ENCODE measurements at regions of chr17 and their contacts with region 1.

Region 1: DNA sequence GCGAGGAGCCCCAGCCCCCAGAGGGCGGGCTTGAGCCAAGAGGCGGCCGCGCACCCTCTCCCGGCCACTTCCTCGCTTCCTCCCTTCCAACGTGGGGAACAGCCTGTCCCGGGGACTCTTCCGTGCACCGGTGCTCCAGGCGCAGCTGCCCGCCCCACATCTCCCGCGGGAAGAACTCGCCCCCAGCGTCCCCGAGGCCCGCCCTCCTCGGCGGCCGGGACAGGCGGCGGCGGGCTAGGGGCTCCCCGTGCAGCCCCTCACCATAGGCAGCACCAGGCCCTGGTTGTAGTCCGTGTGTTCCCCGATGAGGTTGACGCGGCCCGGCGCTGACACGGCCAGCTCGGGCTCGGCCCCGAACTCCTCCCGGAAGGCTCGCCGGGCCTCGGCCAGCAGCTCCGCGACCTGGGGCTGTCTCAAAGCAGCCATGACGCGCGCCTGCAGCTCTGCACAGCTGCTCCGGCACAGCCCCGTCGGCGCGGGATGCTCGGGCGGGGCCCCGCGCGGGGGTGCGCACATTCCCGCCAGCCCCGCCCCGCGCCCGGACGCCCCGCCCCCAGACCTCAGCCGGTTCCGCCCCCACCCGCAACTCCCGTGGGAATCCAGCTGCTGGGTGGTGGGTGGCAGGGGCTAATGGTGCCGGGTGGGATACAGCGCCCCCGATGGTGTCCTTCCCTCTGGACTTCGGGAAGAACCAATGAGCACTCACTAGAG is at the start of gene GALK1:
- DNase-seq: peak; percentile 67
- ATAC-seq: peak; percentile 76
- H3K4me3 Mint-ChIP-seq: peak within 1 kb of the TSS; percentile 75
- H3K27ac Mint-ChIP-seq: peak within 1 kb of the TSS; percentile 92
- H3K4me1 Mint-ChIP-seq: peaks cover 9% of the 10 kb centered on the region
- H3K27me3 Mint-ChIP-seq: no peaks in the 10 kb centered on the region
- CTCF ChIP-seq: no peak
- total RNA-seq, gene GALK1: 42.2 to 49.9 TPM (median 49.4 TPM) in 3 replicates

Region 2: DNA sequence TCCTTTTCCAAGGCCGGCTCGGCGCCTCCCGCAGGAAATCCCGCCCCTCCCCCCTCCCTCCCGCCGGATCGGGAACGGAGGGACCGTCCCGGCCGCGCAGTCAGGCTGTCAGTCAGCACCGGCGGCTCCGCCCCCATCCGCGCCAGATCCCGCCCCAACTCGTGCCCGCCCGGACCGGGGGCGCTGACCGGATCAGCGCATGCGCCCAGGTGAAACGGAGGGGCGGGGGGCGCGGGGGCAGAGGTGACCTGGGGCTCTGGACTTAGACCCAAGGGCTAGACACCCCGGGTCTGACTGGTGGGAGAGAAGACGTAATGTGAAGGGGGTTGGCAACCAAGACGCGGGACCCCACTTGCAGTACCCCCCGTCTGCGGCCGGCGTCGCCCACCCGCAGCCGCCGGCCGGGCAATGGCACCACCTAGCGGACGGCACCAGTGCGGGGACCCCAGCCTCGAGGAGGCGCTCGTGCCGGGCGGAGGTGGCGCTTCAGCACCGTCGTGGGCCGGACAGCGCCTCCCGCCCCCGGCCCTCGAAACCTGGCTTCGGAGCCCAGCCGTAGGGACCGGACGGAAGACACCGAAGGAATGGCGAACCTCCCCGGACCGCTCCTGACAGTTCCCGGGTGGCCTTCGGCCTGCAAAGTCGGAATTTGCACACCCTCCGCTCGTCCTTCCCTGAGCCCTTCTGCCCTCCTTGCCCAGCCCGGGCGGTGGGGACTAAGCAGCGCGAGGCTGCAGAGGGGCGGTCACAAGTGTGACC is 249.2 kb before region 1 on chr17 and contains the start of gene CASKIN2:
- CTCF ChIA-PET with region 1: interaction called, 10 read pairs
- POLR2A ChIA-PET with region 1: no interaction called
- DNase-seq: peak; percentile 98
- ATAC-seq: peak; percentile 76
- H3K4me3 Mint-ChIP-seq: peak within 1 kb of the TSS; percentile 80
- H3K27ac Mint-ChIP-seq: no peak within 1 kb of the TSS
- H3K4me1 Mint-ChIP-seq: peaks cover 20% of the 10 kb centered on the region
- H3K27me3 Mint-ChIP-seq: no peaks in the 10 kb centered on the region
- CTCF ChIP-seq: peak; percentile 90
- total RNA-seq, gene CASKIN2: 31.3 to 32.2 TPM (median 31.9 TPM) in 3 replicates

Region 3: GRCh38 chr17:75779231-75779986 is 14.5 kb after region 1 on chr17:
- CTCF ChIA-PET with region 1: interaction called, 58 read pairs
- POLR2A ChIA-PET with region 1: interaction called, 22 read pairs
- DNase-seq: peak; percentile 94
- ATAC-seq: peak; percentile 85
- H3K4me3 Mint-ChIP-seq: peak overlapping the region; percentile 94
- H3K27ac Mint-ChIP-seq: peak overlapping the region; percentile 99
- H3K4me1 Mint-ChIP-seq: peaks cover 46% of the 10 kb centered on the region
- H3K27me3 Mint-ChIP-seq: peaks cover 4% of the 10 kb centered on the region
- CTCF ChIP-seq: 0 out of 2 replicates have a peak, but pooled peaks have one; percentile 11

Region 4: DNA sequence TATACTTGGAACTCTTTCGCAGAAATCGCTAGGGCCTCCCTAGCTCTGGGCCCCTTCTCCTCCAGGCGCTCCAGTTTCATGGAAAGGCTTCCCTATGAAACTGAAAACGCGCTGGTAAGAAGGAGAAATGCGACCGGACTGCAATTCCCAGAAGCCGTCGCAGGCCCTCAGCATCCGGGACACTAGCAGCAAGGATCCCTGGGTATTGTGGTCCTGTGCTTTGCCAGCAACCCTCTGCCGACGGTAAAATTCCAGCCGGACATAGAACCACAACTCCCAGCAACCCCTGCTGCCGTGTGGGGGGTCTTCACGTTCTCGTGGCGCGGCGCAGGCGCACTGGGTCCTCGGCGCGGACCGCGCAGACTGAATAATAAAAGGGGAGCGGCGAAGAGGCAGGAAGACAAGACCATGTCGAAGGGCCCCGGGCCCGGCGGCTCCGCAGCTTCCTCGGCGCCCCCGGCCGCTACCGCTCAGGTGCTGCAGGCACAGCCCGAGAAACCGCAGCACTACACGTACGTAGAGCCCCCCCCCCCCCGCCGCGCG is 19.7 kb after region 1 on chr17 and contains the start of gene UNK:
- CTCF ChIA-PET with region 1: interaction called, 39 read pairs
- POLR2A ChIA-PET with region 1: interaction called, 7 read pairs
- DNase-seq: peak; percentile 97
- ATAC-seq: peak; percentile 77
- H3K4me3 Mint-ChIP-seq: peak within 1 kb of the TSS; percentile 95
- H3K27ac Mint-ChIP-seq: peak within 1 kb of the TSS; percentile 100
- H3K4me1 Mint-ChIP-seq: peaks cover 34% of the 10 kb centered on the region
- H3K27me3 Mint-ChIP-seq: peaks cover 3% of the 10 kb centered on the region
- CTCF ChIP-seq: no peak
- total RNA-seq, gene UNK: 35.0 to 37.8 TPM (median 35.4 TPM) in 3 replicates

Region 5: DNA sequence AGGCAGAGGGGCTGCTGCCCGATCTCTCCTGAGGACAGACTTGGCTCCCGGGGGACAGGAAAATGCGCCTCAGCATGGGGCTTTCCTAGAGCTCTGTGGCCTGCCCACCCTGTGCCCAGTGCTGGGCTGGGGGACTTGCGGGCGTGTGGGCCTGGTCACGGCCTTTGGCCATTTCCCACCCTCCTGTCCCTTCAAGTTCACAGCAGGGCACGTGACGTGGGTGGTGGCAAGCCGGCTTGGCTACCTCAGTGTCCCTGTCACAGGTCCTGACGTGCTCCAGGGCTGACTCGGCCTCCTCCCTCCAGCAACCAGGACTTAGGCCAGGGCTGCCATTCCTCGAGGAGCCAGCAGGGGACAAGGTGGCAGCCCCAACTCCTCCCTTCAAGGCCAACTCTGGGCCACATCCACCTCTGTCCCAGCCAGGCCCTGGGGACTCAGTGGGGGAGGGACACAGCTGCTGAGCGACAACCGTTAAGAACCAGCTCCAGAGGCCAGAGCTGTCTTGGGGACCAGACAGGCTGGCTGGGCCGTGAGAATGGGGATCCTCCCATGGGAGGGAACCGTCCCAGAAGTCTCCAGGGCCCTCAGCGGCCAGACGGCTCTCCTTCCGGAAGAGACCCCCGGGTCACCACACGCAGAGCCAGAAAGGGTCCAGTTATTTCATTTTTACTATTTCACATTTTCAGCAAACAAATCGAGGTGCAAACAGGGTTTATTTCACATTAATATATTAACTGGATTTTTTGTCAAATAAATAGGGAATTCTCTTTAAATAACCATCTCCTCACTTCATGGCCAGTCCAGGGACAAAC is 80.4 kb after region 1 on chr17:
- CTCF ChIA-PET with region 1: interaction called, 13 read pairs
- POLR2A ChIA-PET with region 1: no interaction called
- DNase-seq: peak; percentile 88
- ATAC-seq: peak; percentile 90
- H3K4me3 Mint-ChIP-seq: no peak overlapping the region
- H3K27ac Mint-ChIP-seq: peak overlapping the region; percentile 90
- H3K4me1 Mint-ChIP-seq: peaks cover 21% of the 10 kb centered on the region
- H3K27me3 Mint-ChIP-seq: no peaks in the 10 kb centered on the region
- CTCF ChIP-seq: peak; percentile 82

Region 6: GRCh38 chr17:75855310-75856081 is 90.6 kb after region 1 on chr17 and contains the start of gene WBP2:
- CTCF ChIA-PET with region 1: interaction called, 10 read pairs
- POLR2A ChIA-PET with region 1: no interaction called
- DNase-seq: peak; percentile 98
- ATAC-seq: peak; percentile 92
- H3K4me3 Mint-ChIP-seq: no peak within 1 kb of the TSS
- H3K27ac Mint-ChIP-seq: peak within 1 kb of the TSS; percentile 98
- H3K4me1 Mint-ChIP-seq: peaks cover 12% of the 10 kb centered on the region
- H3K27me3 Mint-ChIP-seq: no peaks in the 10 kb centered on the region
- CTCF ChIP-seq: no peak
- total RNA-seq, gene WBP2: 64.3 to 69.4 TPM (median 68.8 TPM) in 3 replicates

Measured in WTC11 (cell line).